GM13977 (cell line): ENCODE measurements at regions of chr6 and their contacts with region 1.

Region 1: DNA sequence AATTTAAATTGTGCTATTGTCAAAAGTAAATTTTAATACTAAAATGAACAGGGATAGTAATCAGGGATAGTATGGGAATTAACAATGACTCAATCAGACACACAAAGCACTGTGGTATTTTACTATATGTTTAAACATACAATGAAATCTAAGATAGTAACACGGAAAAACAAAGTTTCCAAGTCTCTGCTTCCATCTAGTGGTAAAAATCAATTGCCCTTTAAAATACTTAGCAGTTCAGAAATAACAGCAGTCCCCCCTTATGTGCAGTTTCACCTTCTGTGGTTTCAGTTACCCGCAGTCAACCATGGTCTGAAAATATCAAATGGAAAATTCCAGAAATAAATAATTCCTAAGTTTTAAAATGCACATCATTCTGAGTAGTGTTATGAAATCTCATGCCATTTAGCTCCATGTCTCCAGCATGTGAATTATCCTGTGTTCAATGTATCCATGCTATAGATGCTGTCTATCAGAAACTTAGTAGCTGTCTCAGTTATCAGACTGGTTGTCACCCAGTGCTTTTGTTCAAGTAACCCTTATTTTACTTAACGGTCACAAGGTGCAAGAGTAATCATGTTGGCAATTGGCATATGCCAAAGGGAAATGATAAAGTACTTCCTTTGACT is 58.5 kb downstream of the AHI1 start:
- DNase-seq: peak; percentile 23
- CTCF ChIP-seq: peak; percentile 66

Region 2: DNA sequence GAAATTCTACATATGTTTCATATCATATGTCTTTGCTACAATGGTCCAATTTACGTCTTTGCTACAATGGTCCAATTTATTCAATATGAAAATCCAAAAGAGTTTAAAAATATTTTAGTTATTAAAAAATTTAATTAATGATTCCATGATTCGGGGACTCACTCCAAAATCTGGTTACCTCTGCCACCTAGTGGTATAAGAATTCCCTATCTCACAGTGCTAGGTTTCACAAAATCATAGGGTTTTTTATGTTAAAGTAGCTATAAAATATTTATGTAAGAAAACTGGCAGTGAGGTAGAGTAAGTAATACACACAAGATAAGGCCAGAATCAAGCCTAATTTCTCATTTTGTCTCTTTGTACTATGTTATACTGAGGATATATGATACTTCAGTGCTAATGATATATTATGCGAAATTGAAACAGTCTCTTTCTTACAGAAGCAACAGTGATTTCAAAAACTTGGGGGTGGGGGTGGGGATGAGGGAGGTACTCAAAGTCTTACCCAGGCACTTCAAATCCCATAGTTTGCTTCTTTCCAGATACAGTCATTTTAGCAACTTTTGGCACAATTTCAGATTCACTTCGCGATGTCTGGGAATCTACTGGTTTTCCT is 436.7 kb before region 1 on chr6:
- in situ Hi-C with region 1: loop called (anchors 25 kb)
- DNase-seq: peak; percentile 7
- CTCF ChIP-seq: peak; percentile 53